Activated T-helper 1 cell treated with anti-CD3 and anti-CD28 coated beads, Interleukin-12 subunit alpha, Interleukin-12 subunit beta, Interleukin-2, Interleukin-4 antibody, amounts not matched to agents 30 ng/mL and 10 ng/mL and 1 ng/mL, durations not matched to agents 14 hours and 24 hours and 36 hours (primary cell): ENCODE measurements at regions of chr5 and their contacts with region 1.

Region 1: GRCh38 chr5:131209506-131210150 is 38.9 kb downstream of the LYRM7 start:
- DNase-seq: peak; percentile 58
- H3K4me3 Mint-ChIP-seq: peak overlapping the region; percentile 83
- H3K27ac Mint-ChIP-seq: peak overlapping the region; percentile 99
- H3K4me1 Mint-ChIP-seq: peaks cover 65% of the 10 kb centered on the region
- H3K27me3 Mint-ChIP-seq: no peaks in the 10 kb centered on the region

Region 2: GRCh38 chr5:131042021-131042789 is 167.4 kb before region 1 on chr5:
- intact Hi-C with region 1: no loop called
- DNase-seq: no peak
- H3K4me3 Mint-ChIP-seq: no peak overlapping the region
- H3K27ac Mint-ChIP-seq: no peak overlapping the region
- H3K4me1 Mint-ChIP-seq: no peaks in the 10 kb centered on the region
- H3K27me3 Mint-ChIP-seq: peaks cover 16% of the 10 kb centered on the region

Region 3: GRCh38 chr5:131165119-131165727 is 44.4 kb before region 1 on chr5 and contains the start of gene HINT1:
- intact Hi-C with region 1: loop called (anchors 1 kb)
- DNase-seq: peak; percentile 93
- H3K4me3 Mint-ChIP-seq: peak within 1 kb of the TSS; percentile 99
- H3K27ac Mint-ChIP-seq: peak within 1 kb of the TSS; percentile 99
- H3K4me1 Mint-ChIP-seq: peaks cover 55% of the 10 kb centered on the region
- H3K27me3 Mint-ChIP-seq: peaks cover 2% of the 10 kb centered on the region
- total RNA-seq, gene HINT1: 249 and 262 TPM in 2 replicates

Region 4: GRCh38 chr5:131224387-131225201 is 15.0 kb after region 1 on chr5:
- intact Hi-C with region 1: loop called (anchors 1 kb)
- DNase-seq: no peak
- H3K4me3 Mint-ChIP-seq: no peak overlapping the region
- H3K27ac Mint-ChIP-seq: no peak overlapping the region
- H3K4me1 Mint-ChIP-seq: peaks cover 13% of the 10 kb centered on the region
- H3K27me3 Mint-ChIP-seq: no peaks in the 10 kb centered on the region

Region 5: GRCh38 chr5:131263648-131264450 is 54.2 kb after region 1 on chr5 and contains the start of gene CDC42SE2:
- intact Hi-C with region 1: loop called (anchors 1 kb)
- DNase-seq: peak; percentile 84
- H3K4me3 Mint-ChIP-seq: peak within 1 kb of the TSS; percentile 84
- H3K27ac Mint-ChIP-seq: peak within 1 kb of the TSS; percentile 92
- H3K4me1 Mint-ChIP-seq: peaks cover 48% of the 10 kb centered on the region
- H3K27me3 Mint-ChIP-seq: no peaks in the 10 kb centered on the region
- total RNA-seq, gene CDC42SE2: 100.0 and 103 TPM in 2 replicates

Region 6: GRCh38 chr5:131357739-131358561 is 148.3 kb after region 1 on chr5:
- intact Hi-C with region 1: loop called (anchors 5 kb)
- DNase-seq: peak; percentile 26
- H3K4me3 Mint-ChIP-seq: peak overlapping the region; percentile 37
- H3K27ac Mint-ChIP-seq: peak overlapping the region; percentile 88
- H3K4me1 Mint-ChIP-seq: peaks cover 46% of the 10 kb centered on the region
- H3K27me3 Mint-ChIP-seq: no peaks in the 10 kb centered on the region